AG04449 (cell line): ENCODE measurements at regions of chr1 and their contacts with region 1.

Region 1: GRCh38 chr1:44799770-44800584 is at the start of gene PLK3:
- DNase-seq: peak; percentile 85
- H3K4me3 ChIP-seq: peak within 1 kb of the TSS; percentile 86
- CTCF ChIP-seq: peak; percentile 96

Region 2: DNA sequence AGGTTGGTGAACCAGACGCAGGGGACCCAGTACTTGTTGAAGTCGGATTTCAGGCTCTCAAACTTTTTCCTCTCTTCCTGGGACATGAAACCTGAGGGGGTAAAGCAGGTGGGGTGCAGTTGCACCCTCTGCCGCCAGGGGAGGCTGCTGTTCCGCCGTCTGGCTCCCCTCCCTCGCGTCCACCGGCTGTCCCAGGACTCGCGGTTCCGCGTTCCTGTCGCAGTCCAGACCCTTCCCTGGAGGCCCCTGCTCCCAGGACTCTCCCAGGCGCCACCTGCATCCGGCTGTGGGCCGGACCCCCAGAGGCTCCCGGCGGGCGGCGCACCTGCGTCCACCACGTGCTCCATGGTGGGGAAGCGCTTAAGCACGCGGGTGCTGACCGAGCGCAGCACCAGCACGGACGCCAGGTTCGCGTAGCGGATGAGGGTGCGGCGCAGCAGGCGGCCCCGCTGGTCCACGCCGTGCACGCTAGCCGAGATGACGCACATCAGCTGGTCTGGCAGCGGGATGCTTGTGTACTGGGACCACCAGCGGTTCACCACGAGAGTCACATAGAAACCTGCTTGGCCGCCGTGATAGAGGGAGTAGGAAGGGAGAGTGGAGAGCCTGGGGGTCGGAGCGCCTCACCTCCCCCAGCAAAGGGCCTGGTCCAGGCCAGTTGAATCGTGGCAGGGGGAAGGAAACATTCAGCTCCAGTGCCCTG is 13.7 kb before region 1 on chr1:
- CTCF ChIA-PET with region 1: interaction called, 40 read pairs
- POLR2A ChIA-PET with region 1: interaction called, 10 read pairs
- DNase-seq: no peak
- H3K4me3 ChIP-seq: peak overlapping the region; percentile 50
- CTCF ChIP-seq: peak; percentile 96

Region 3: GRCh38 chr1:44812822-44813543 is 13.0 kb after region 1 on chr1:
- CTCF ChIA-PET with region 1: interaction called, 32 read pairs
- POLR2A ChIA-PET with region 1: interaction called, 69 read pairs
- DNase-seq: no peak
- H3K4me3 ChIP-seq: peak overlapping the region; percentile 35
- CTCF ChIP-seq: no peak

Region 4: GRCh38 chr1:44819608-44820327 is 19.8 kb after region 1 on chr1:
- CTCF ChIA-PET with region 1: interaction called, 6 read pairs
- POLR2A ChIA-PET with region 1: interaction called, 78 read pairs
- DNase-seq: peak; percentile 83
- H3K4me3 ChIP-seq: peak overlapping the region; percentile 59
- CTCF ChIP-seq: no peak

Region 5: GRCh38 chr1:44848456-44849181 is 48.6 kb after region 1 on chr1:
- CTCF ChIA-PET with region 1: no interaction called
- POLR2A ChIA-PET with region 1: no interaction called
- DNase-seq: no peak
- H3K4me3 ChIP-seq: no peak overlapping the region
- CTCF ChIP-seq: no peak

Region 6: GRCh38 chr1:44985747-44986359 is 185.9 kb after region 1 on chr1:
- CTCF ChIA-PET with region 1: no interaction called
- POLR2A ChIA-PET with region 1: no interaction called
- DNase-seq: no peak
- H3K4me3 ChIP-seq: peak overlapping the region; percentile 99
- CTCF ChIP-seq: no peak